ENCODE measurements at regions of chr14 and their contacts with region 1.

Region 1: GRCh38 chr14:95527387-95528002 is 7.4 kb upstream of the GLRX5 start:
- DNase-seq: no peak
- H3K4me3 ChIP-seq: peak overlapping the region; percentile 5
- H3K27ac ChIP-seq: peak overlapping the region; percentile 70
- H3K4me1 ChIP-seq: peaks cover 71% of the 10 kb centered on the region
- H3K27me3 ChIP-seq: no peaks in the 10 kb centered on the region
- CTCF ChIP-seq: peak; percentile 86

Region 2: DNA sequence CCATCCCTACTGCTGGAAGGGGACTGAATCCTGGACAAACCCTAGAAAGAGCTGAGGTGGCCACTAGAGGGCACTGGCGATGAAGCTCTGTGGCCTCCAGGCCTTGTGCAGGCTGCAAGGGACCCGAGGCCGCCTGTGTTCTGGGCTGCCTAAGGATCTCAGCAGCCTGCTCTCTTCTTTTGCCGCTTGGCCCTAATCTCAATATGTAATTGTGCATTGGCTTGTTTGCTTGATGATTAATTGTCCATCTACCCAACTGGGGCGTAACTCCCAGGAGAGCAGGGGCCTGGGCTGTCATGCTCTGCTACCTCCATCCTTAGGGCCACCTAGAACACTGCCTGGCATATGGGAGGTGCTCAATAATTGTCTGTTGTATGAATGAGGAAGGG is 84.9 kb before region 1 on chr14:
- intact Hi-C with region 1: loop called (anchors 5 kb)
- DNase-seq: peak; percentile 80
- H3K4me3 ChIP-seq: no peak overlapping the region
- H3K27ac ChIP-seq: peak overlapping the region; percentile 12
- H3K4me1 ChIP-seq: peaks cover 9% of the 10 kb centered on the region
- H3K27me3 ChIP-seq: no peaks in the 10 kb centered on the region
- CTCF ChIP-seq: peak; percentile 91

Region 3: DNA sequence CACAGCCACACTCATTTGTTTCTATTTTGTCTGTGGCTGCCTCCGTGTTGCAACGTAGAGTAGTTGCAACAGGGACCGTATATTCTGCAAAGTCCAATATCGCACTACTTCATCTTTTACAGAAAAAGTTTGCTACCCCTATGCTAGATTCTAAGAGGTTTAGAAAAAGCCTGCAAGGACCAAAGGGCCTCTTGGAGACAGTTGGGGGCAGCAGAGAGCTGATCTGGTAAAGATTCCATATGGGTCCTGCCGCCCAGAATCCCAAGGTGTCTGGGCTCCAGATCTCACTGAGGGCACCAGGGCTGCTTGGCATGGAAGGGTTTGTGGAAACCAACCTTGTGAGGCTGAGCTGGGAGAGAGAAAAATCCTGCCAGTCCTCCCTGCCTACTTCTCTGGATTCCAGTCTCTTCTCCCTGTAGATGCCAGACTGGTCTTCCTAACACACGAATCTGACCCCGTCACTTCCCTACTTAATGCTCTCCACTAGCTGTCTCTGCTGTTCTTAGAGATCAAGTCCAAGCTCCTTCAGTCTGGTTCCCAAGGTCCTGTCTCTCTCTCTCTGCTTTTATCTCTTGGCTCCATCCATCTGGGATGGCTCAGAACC is 82.0 kb after region 1 on chr14:
- intact Hi-C with region 1: no loop called
- DNase-seq: no peak
- H3K4me3 ChIP-seq: no peak overlapping the region
- H3K27ac ChIP-seq: no peak overlapping the region
- H3K4me1 ChIP-seq: no peaks in the 10 kb centered on the region
- H3K27me3 ChIP-seq: peaks cover 96% of the 10 kb centered on the region
- CTCF ChIP-seq: peak; percentile 42